AG04450 (cell line): ENCODE measurements at regions of chr1 and their contacts with region 1.

Region 1: GRCh38 chr1:229495782-229496181 is 12.4 kb downstream of the NUP133 start:
- DNase-seq: no peak
- H3K4me3 ChIP-seq: no peak overlapping the region
- H3K27ac ChIP-seq: no peak overlapping the region
- H3K27me3 ChIP-seq: no peaks in the 10 kb centered on the region
- CTCF ChIP-seq: no peak

Region 2: GRCh38 chr1:229514578-229515275 is 18.9 kb after region 1 on chr1:
- CTCF ChIA-PET with region 1: interaction called, 10 read pairs
- POLR2A ChIA-PET with region 1: no interaction called
- DNase-seq: peak; percentile 30
- H3K4me3 ChIP-seq: no peak overlapping the region
- H3K27ac ChIP-seq: no peak overlapping the region
- H3K27me3 ChIP-seq: no peaks in the 10 kb centered on the region
- CTCF ChIP-seq: peak; percentile 96